ENCODE measurements at regions of chr1 and their contacts with region 1.

Region 1: GRCh38 chr1:166910396-166910994 is 34.4 kb upstream of the TADA1 start:
- DNase-seq: peak; percentile 38 to 56
- H3K4me3 ChIP-seq: no peak overlapping the region
- H3K27ac ChIP-seq: no peak overlapping the region
- H3K4me1 ChIP-seq: no peaks in the 10 kb centered on the region
- H3K27me3 ChIP-seq: no peaks in the 10 kb centered on the region; a peak in 1 of 7 replicates
- CTCF ChIP-seq: peak in 2 of 3 experiments; percentile 89 to 92; a peak in 3 of 4 replicates
- EP300 ChIP-seq: no peak
- POLR2A ChIP-seq: no peak
- RAD21 ChIP-seq: peak; percentile 96 to 98

Region 2: GRCh38 chr1:166814611-166815010 is 95.9 kb before region 1 on chr1:
- CTCF ChIA-PET with region 1: no interaction called
- POLR2A ChIA-PET with region 1: no interaction called
- DNase-seq: no peak
- H3K4me3 ChIP-seq: no peak overlapping the region
- H3K27ac ChIP-seq: no peak overlapping the region
- H3K4me1 ChIP-seq: no peaks in the 10 kb centered on the region
- H3K27me3 ChIP-seq: peaks cover 0 to 1% (median 0%) of the 10 kb centered on the region in 4 experiments; a peak in 1 of 7 replicates
- CTCF ChIP-seq: no peak
- EP300 ChIP-seq: no peak
- POLR2A ChIP-seq: no peak
- RAD21 ChIP-seq: no peak

Region 3: DNA sequence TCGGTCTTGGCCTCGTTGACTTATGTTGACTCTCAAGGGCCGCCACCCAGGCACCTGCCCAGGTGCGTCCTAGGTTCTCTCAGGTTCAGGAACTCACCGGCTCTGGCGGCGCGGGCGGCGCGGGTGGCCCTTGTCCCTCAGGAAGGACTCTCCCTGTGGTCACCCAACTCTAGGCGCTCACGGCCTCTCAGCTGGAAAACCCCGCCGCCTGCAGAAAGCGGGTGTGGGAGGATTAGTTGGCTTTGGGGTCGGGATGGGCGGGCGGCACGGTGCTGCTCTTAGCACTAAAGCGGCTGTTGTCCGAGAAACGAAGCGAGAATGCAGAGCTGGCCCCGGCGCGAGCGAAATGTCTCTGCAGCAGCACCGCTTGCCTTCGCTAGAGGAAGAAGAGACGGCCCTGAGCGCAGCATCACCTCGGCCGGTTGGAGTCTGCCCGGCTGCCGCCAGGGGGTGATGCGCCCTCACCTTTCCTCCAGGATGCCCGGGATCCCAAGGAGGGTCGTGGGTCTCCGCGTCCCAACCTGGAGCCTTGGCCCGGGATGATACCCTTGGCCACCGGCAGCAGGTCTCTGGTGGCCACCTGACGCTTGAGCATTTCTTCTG is 26.4 kb before region 1 on chr1:
- CTCF ChIA-PET with region 1: interaction called, 152 read pairs
- POLR2A ChIA-PET with region 1: no interaction called
- DNase-seq: peak; percentile 66 to 91
- H3K4me3 ChIP-seq: peak overlapping the region; percentile 15 to 53 (median 24); a peak in 6 of 8 replicates
- H3K27ac ChIP-seq: no peak overlapping the region
- H3K4me1 ChIP-seq: 0 out of 7 replicates have a peak, but pooled peaks cover 0 to 3% (median 0%) of the 10 kb centered on the region in 4 experiments
- H3K27me3 ChIP-seq: peaks cover 1 to 14% (median 12%) of the 10 kb centered on the region in 4 experiments
- CTCF ChIP-seq: peak; percentile 94 to 96 (median 95)
- EP300 ChIP-seq: no peak
- POLR2A ChIP-seq: no peak
- RAD21 ChIP-seq: peak; percentile 95 to 96

Region 4: GRCh38 chr1:166920561-166921475 is 10.3 kb after region 1 on chr1:
- CTCF ChIA-PET with region 1: interaction called, 19 read pairs
- POLR2A ChIA-PET with region 1: interaction called, 3 read pairs
- DNase-seq: peak; percentile 25 to 78
- H3K4me3 ChIP-seq: peak overlapping the region; percentile 22 to 57 (median 36)
- H3K27ac ChIP-seq: no peak overlapping the region
- H3K4me1 ChIP-seq: peaks cover 1 to 6% (median 3%) of the 10 kb centered on the region in 4 experiments; a peak in 5 of 7 replicates
- H3K27me3 ChIP-seq: peaks cover 5 to 37% (median 36%) of the 10 kb centered on the region in 4 experiments
- CTCF ChIP-seq: no peak
- EP300 ChIP-seq: no peak
- POLR2A ChIP-seq: no peak
- RAD21 ChIP-seq: no peak

Region 5: DNA sequence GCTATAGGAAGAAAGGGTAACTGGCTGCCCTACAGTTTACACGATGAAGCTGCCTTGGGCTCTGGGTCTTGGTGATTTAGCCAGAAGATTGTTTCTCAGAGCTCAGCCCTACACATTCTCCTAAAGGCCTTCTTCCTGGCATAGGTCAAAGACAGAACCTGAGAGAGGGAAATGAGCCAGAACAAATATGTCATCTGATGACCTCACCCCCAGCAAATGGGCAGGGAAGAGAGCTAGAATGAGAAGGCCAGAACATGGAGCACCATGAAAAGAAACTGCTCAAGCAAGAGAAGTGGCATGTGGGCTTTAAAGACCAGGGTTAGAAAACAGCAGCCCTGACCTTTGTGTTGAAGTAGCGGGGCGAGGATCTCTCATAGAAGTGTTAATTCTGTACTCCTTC is 70.3 kb after region 1 on chr1:
- CTCF ChIA-PET with region 1: interaction called, 12 read pairs
- POLR2A ChIA-PET with region 1: no interaction called
- DNase-seq: no peak
- H3K4me3 ChIP-seq: no peak overlapping the region
- H3K27ac ChIP-seq: no peak overlapping the region
- H3K4me1 ChIP-seq: no peaks in the 10 kb centered on the region
- H3K27me3 ChIP-seq: peaks cover 11 to 19% (median 17%) of the 10 kb centered on the region in 4 experiments
- CTCF ChIP-seq: no peak
- EP300 ChIP-seq: no peak
- POLR2A ChIP-seq: no peak
- RAD21 ChIP-seq: no peak

Region 6: GRCh38 chr1:167033646-167034045 is 123.2 kb after region 1 on chr1:
- CTCF ChIA-PET with region 1: interaction called, 11 read pairs
- POLR2A ChIA-PET with region 1: no interaction called
- DNase-seq: no peak
- H3K4me3 ChIP-seq: no peak overlapping the region
- H3K27ac ChIP-seq: no peak overlapping the region
- H3K4me1 ChIP-seq: no peaks in the 10 kb centered on the region
- H3K27me3 ChIP-seq: no peaks in the 10 kb centered on the region
- CTCF ChIP-seq: no peak
- EP300 ChIP-seq: no peak
- POLR2A ChIP-seq: no peak
- RAD21 ChIP-seq: no peak

Region 7: GRCh38 chr1:167066333-167067122 is 156.0 kb after region 1 on chr1:
- CTCF ChIA-PET with region 1: interaction called, 874 read pairs
- POLR2A ChIA-PET with region 1: no interaction called
- DNase-seq: peak; percentile 29 to 97
- H3K4me3 ChIP-seq: peak overlapping the region in 2 of 4 experiments; percentile 14 to 44; a peak in 4 of 8 replicates
- H3K27ac ChIP-seq: no peak overlapping the region
- H3K4me1 ChIP-seq: peaks cover 0 to 2% (median 0%) of the 10 kb centered on the region in 4 experiments; a peak in 1 of 7 replicates
- H3K27me3 ChIP-seq: no peaks in the 10 kb centered on the region
- CTCF ChIP-seq: peak; percentile 84 to 94 (median 93)
- EP300 ChIP-seq: no peak
- POLR2A ChIP-seq: no peak
- RAD21 ChIP-seq: peak; percentile 97 to 100